Activated CD8-positive, alpha-beta T cell treated with anti-CD3 and anti-CD28 coated beads for 36 hours (primary cell): ENCODE measurements at regions of chr14 and their contacts with region 1.

Region 1: GRCh38 chr14:98167705-98168104 is 1104.3 kb downstream of the BCL11B start:
- DNase-seq: peak; percentile 58
- ATAC-seq: no peak
- H3K4me3 Mint-ChIP-seq: peak overlapping the region; percentile 56
- H3K27ac Mint-ChIP-seq: peak overlapping the region; percentile 94
- H3K4me1 Mint-ChIP-seq: peaks cover 80% of the 10 kb centered on the region
- H3K27me3 Mint-ChIP-seq: no peaks in the 10 kb centered on the region
- CTCF ChIP-seq: no peak

Region 2: GRCh38 chr14:98182393-98183055 is 14.8 kb after region 1 on chr14:
- CTCF ChIA-PET with region 1: interaction called, 7 read pairs
- POLR2A ChIA-PET with region 1: interaction called, 66 read pairs
- intact Hi-C with region 1: no loop called
- DNase-seq: peak; percentile 83
- ATAC-seq: peak; percentile 65
- H3K4me3 Mint-ChIP-seq: peak overlapping the region; percentile 33
- H3K27ac Mint-ChIP-seq: peak overlapping the region; percentile 99
- H3K4me1 Mint-ChIP-seq: peaks cover 93% of the 10 kb centered on the region
- H3K27me3 Mint-ChIP-seq: no peaks in the 10 kb centered on the region
- CTCF ChIP-seq: no peak

Region 3: GRCh38 chr14:98189062-98189461 is 21.4 kb after region 1 on chr14:
- CTCF ChIA-PET with region 1: interaction called, 6 read pairs
- POLR2A ChIA-PET with region 1: interaction called, 66 read pairs
- intact Hi-C with region 1: no loop called
- DNase-seq: peak; percentile 64
- ATAC-seq: peak; percentile 57
- H3K4me3 Mint-ChIP-seq: peak overlapping the region; percentile 74
- H3K27ac Mint-ChIP-seq: peak overlapping the region; percentile 99
- H3K4me1 Mint-ChIP-seq: peaks cover 97% of the 10 kb centered on the region
- H3K27me3 Mint-ChIP-seq: no peaks in the 10 kb centered on the region
- CTCF ChIP-seq: no peak

Region 4: GRCh38 chr14:98210045-98210672 is 42.5 kb after region 1 on chr14:
- CTCF ChIA-PET with region 1: interaction called, 3 read pairs
- POLR2A ChIA-PET with region 1: interaction called, 13 read pairs
- intact Hi-C with region 1: loop called (anchors 5 kb)
- DNase-seq: peak; percentile 81
- ATAC-seq: peak; percentile 72
- H3K4me3 Mint-ChIP-seq: peak overlapping the region; percentile 74
- H3K27ac Mint-ChIP-seq: peak overlapping the region; percentile 94
- H3K4me1 Mint-ChIP-seq: peaks cover 83% of the 10 kb centered on the region
- H3K27me3 Mint-ChIP-seq: no peaks in the 10 kb centered on the region
- CTCF ChIP-seq: no peak